ENCODE measurements at regions of chr15 and their contacts with region 1.

Region 1: GRCh38 chr15:84023636-84024035 is 211.9 kb upstream of the GOLGA6L4 start:
- DNase-seq: peak; percentile 55
- CTCF ChIP-seq: peak; percentile 24

Region 2: GRCh38 chr15:83571820-83572707 is 451.6 kb before region 1 on chr15:
- in situ Hi-C with region 1: loop called (anchors 10 kb)
- DNase-seq: peak; percentile 32
- CTCF ChIP-seq: peak; percentile 29

Region 3: DNA sequence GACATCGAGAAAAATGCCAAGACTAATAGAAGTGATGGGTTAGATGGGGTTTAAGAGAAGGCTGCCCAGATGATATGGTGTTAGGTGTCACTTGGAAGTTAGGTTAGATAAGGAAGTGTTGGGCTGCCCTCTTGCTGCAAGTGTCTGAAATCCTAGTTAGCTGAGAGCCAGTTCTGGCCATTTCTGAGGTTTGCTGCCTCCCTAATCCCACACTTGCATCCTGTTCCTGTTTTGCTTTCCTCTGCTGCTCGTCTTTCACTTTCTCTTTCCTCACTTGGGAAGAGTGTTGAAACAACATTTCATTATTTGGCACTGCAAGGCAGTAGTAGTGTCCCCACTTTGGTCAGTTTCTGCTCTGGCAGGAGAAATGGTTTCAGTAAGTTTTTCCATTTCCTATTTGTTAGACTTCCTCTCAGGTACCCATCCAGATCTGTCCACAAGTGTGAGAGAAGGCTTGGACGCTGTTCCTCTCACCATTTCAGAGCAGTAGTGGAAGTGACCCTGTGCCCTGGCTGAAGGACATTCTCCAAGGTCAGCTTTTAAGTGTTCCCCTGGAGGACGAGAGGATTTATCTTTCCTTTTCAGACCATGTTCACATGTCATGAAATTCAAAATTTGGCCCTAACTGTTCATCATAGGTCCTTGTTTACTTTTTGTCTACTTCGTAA is 276.5 kb before region 1 on chr15:
- in situ Hi-C with region 1: loop called (anchors 25 kb)
- DNase-seq: no peak
- CTCF ChIP-seq: no peak

Region 4: DNA sequence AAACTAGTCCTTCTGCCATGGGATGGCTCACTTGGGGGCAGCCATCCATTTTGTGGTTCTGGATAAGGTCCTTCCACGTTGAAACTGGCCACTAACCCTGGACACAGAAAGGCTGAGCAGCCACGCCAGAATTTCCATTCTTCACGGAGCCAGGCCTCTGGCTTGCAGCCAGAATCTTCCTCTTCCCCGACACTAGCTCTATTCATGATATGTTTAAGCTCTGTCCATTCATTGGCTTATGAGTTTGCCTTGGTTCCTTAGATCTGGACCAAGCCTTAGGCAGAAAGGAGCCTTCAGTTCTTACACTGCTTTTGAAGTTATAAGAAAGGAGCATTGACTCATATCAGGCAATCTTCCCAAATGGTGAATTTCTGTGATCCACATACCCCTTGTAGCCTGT is 76.5 kb before region 1 on chr15:
- in situ Hi-C with region 1: no loop called
- DNase-seq: no peak
- CTCF ChIP-seq: no peak

Measured in GM13976 (cell line).